ENCODE measurements at regions of chr9 and their contacts with region 1.

Region 1: GRCh38 chr9:111298731-111299598 is 31.1 kb downstream of the OR2K2 start:
- DNase-seq: peak in 1 of 2 experiments; percentile 49
- H3K4me3 ChIP-seq: no peak overlapping the region
- H3K4me3 Mint-ChIP-seq: no peak overlapping the region
- H3K27ac Mint-ChIP-seq: no peak overlapping the region
- H3K4me1 ChIP-seq: no peaks in the 10 kb centered on the region
- H3K4me1 Mint-ChIP-seq: no peaks in the 10 kb centered on the region
- H3K27me3 ChIP-seq: no peaks in the 10 kb centered on the region
- H3K27me3 Mint-ChIP-seq: no peaks in the 10 kb centered on the region
- CTCF ChIP-seq: peak; percentile 67 to 80

Region 2: GRCh38 chr9:110842169-110842568 is 456.8 kb before region 1 on chr9:
- CTCF ChIA-PET with region 1: no interaction called
- POLR2A ChIA-PET with region 1: interaction called, 4 read pairs
- intact Hi-C with region 1: loop called (anchors 10 kb)
- DNase-seq: no peak
- H3K4me3 ChIP-seq: no peak overlapping the region
- H3K4me3 Mint-ChIP-seq: no peak overlapping the region
- H3K27ac Mint-ChIP-seq: no peak overlapping the region
- H3K4me1 ChIP-seq: peaks cover 6% of the 10 kb centered on the region; the same call in 1 of the 2 replicates
- H3K4me1 Mint-ChIP-seq: peaks cover 8% of the 10 kb centered on the region
- H3K27me3 ChIP-seq: no peaks in the 10 kb centered on the region
- H3K27me3 Mint-ChIP-seq: no peaks in the 10 kb centered on the region
- CTCF ChIP-seq: peak in 1 of 2 experiments; percentile 45

Region 3: GRCh38 chr9:110886832-110887231 is 412.1 kb before region 1 on chr9:
- CTCF ChIA-PET with region 1: no interaction called
- POLR2A ChIA-PET with region 1: no interaction called
- intact Hi-C with region 1: no loop called
- DNase-seq: no peak
- H3K4me3 ChIP-seq: no peak overlapping the region
- H3K4me3 Mint-ChIP-seq: no peak overlapping the region
- H3K27ac Mint-ChIP-seq: no peak overlapping the region
- H3K4me1 ChIP-seq: no peaks in the 10 kb centered on the region
- H3K4me1 Mint-ChIP-seq: no peaks in the 10 kb centered on the region
- H3K27me3 ChIP-seq: no peaks in the 10 kb centered on the region
- H3K27me3 Mint-ChIP-seq: no peaks in the 10 kb centered on the region
- CTCF ChIP-seq: no peak

Region 4: GRCh38 chr9:110996436-110997220 is 302.3 kb before region 1 on chr9:
- CTCF ChIA-PET with region 1: no interaction called
- POLR2A ChIA-PET with region 1: no interaction called
- intact Hi-C with region 1: loop called (anchors 5 kb)
- DNase-seq: no peak
- H3K4me3 ChIP-seq: no peak overlapping the region
- H3K4me3 Mint-ChIP-seq: no peak overlapping the region
- H3K27ac Mint-ChIP-seq: no peak overlapping the region
- H3K4me1 ChIP-seq: peaks cover 6% of the 10 kb centered on the region
- H3K4me1 Mint-ChIP-seq: peaks cover 7% of the 10 kb centered on the region
- H3K27me3 ChIP-seq: no peaks in the 10 kb centered on the region
- H3K27me3 Mint-ChIP-seq: no peaks in the 10 kb centered on the region
- CTCF ChIP-seq: no peak

Region 5: GRCh38 chr9:111178331-111179055 is 120.5 kb before region 1 on chr9:
- CTCF ChIA-PET with region 1: no interaction called
- POLR2A ChIA-PET with region 1: no interaction called
- intact Hi-C with region 1: no loop called
- DNase-seq: no peak
- H3K4me3 ChIP-seq: no peak overlapping the region
- H3K4me3 Mint-ChIP-seq: no peak overlapping the region
- H3K27ac Mint-ChIP-seq: no peak overlapping the region
- H3K4me1 ChIP-seq: no peaks in the 10 kb centered on the region
- H3K4me1 Mint-ChIP-seq: no peaks in the 10 kb centered on the region
- H3K27me3 ChIP-seq: 0 out of 2 replicates have a peak, but pooled peaks cover 2% of the 10 kb centered on the region
- H3K27me3 Mint-ChIP-seq: peaks cover 13% of the 10 kb centered on the region
- CTCF ChIP-seq: no peak

Region 6: DNA sequence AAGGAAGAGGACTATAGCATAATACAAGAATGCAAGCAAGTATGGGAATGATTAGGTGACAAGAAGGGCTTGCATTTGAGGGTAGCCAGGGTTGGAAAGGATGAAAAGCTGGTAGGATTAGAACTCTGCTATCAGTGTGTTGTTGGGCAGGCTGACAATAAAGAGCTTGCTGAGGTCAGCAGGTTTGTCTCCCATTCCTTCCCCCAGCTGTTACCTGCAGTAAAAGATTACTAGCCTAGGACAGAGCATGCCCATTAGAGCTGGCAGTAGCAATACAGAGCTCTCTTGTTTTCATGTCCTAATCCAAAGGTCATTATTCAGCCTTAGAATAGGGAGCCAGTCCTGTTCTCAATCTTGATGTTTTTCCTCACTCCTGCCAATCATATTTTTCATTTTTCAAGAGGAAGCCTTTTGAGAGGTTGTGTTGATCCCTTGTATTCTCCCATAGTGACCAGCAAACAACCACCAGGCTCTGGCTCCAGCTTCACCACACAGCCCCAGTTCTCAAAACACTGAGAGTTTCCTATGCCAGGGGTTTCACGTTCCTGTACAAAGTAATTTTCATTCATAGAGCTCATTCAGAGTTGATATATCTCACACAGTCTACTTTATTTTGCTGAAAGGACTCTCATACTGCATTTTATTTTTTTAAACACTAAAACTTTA is 40.6 kb before region 1 on chr9:
- CTCF ChIA-PET with region 1: no interaction called
- POLR2A ChIA-PET with region 1: no interaction called
- intact Hi-C with region 1: no loop called
- DNase-seq: no peak
- H3K4me3 ChIP-seq: no peak overlapping the region
- H3K4me3 Mint-ChIP-seq: no peak overlapping the region
- H3K27ac Mint-ChIP-seq: no peak overlapping the region
- H3K4me1 ChIP-seq: no peaks in the 10 kb centered on the region
- H3K4me1 Mint-ChIP-seq: no peaks in the 10 kb centered on the region
- H3K27me3 ChIP-seq: no peaks in the 10 kb centered on the region
- H3K27me3 Mint-ChIP-seq: peaks cover 3% of the 10 kb centered on the region
- CTCF ChIP-seq: no peak

Region 7: GRCh38 chr9:111399772-111400563 is 101.0 kb after region 1 on chr9:
- CTCF ChIA-PET with region 1: no interaction called
- POLR2A ChIA-PET with region 1: no interaction called
- intact Hi-C with region 1: loop called (anchors 1 kb)
- DNase-seq: peak; percentile 64 to 66
- H3K4me3 ChIP-seq: no peak overlapping the region
- H3K4me3 Mint-ChIP-seq: no peak overlapping the region
- H3K27ac Mint-ChIP-seq: peak overlapping the region; percentile 68
- H3K4me1 ChIP-seq: no peaks in the 10 kb centered on the region
- H3K4me1 Mint-ChIP-seq: peaks cover 12% of the 10 kb centered on the region
- H3K27me3 ChIP-seq: no peaks in the 10 kb centered on the region
- H3K27me3 Mint-ChIP-seq: no peaks in the 10 kb centered on the region
- CTCF ChIP-seq: peak; percentile 66 to 70